Esophagus muscularis mucosa (tissue), 4 donors: ENCODE measurements at regions of chr7 and their contacts with region 1.

Region 1: DNA sequence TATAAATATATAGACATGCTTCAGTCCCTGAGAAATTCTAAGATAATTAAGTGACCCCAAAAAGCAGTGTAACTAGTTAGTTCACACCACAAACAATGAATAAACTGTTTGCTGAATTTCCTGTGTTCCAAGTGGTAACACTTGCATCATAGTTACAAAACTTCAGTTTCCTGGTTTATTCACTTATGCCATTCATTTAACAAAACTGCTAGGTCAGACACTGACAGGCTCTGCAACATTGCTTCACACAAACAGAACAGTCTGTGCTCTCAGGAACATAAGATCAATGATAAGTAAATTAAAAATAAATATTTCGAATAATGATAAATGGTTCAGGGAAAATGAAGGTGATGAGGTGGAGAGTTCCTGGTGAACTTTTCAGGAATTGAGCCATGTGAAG is 133.3 kb upstream of the NAMPT start:
- DNase-seq: no peak
- H3K4me3 ChIP-seq: no peak overlapping the region
- H3K27ac ChIP-seq: peak overlapping the region; percentile 39 to 63 (median 49)
- H3K4me1 ChIP-seq: peaks cover 22 to 57% (median 38%) of the 10 kb centered on the region in 4 donors
- H3K27me3 ChIP-seq: no peaks in the 10 kb centered on the region
- CTCF ChIP-seq: no peak
- EP300 ChIP-seq: peak; percentile 84
- POLR2A ChIP-seq: no peak

Region 2: GRCh38 chr7:106294337-106294736 is 123.8 kb before region 1 on chr7:
- intact Hi-C with region 1: loop called (anchors 5 kb)
- DNase-seq: no peak
- H3K4me3 ChIP-seq: no peak overlapping the region
- H3K27ac ChIP-seq: no peak overlapping the region
- H3K4me1 ChIP-seq: no peaks in the 10 kb centered on the region
- H3K27me3 ChIP-seq: no peaks in the 10 kb centered on the region
- CTCF ChIP-seq: no peak
- EP300 ChIP-seq: no peak
- POLR2A ChIP-seq: no peak

Region 3: GRCh38 chr7:106346678-106347217 is 71.3 kb before region 1 on chr7:
- intact Hi-C with region 1: loop called (anchors 2 kb)
- DNase-seq: peak; percentile 42
- H3K4me3 ChIP-seq: no peak overlapping the region
- H3K27ac ChIP-seq: no peak overlapping the region
- H3K4me1 ChIP-seq: no peaks in the 10 kb centered on the region
- H3K27me3 ChIP-seq: no peaks in the 10 kb centered on the region
- CTCF ChIP-seq: no peak
- EP300 ChIP-seq: no peak
- POLR2A ChIP-seq: no peak

Region 4: GRCh38 chr7:106448992-106449859 is 31.1 kb after region 1 on chr7:
- intact Hi-C with region 1: no loop called
- DNase-seq: no peak
- H3K4me3 ChIP-seq: no peak overlapping the region
- H3K27ac ChIP-seq: no peak overlapping the region
- H3K4me1 ChIP-seq: no peaks in the 10 kb centered on the region
- H3K27me3 ChIP-seq: no peaks in the 10 kb centered on the region
- CTCF ChIP-seq: no peak
- EP300 ChIP-seq: no peak
- POLR2A ChIP-seq: no peak

Region 5: GRCh38 chr7:106542550-106543220 is 124.6 kb after region 1 on chr7:
- intact Hi-C with region 1: no loop called
- DNase-seq: peak; percentile 89
- H3K4me3 ChIP-seq: no peak overlapping the region
- H3K27ac ChIP-seq: peak overlapping the region; percentile 68 to 80 (median 72)
- H3K4me1 ChIP-seq: peaks cover 6 to 24% (median 18%) of the 10 kb centered on the region in 4 donors
- H3K27me3 ChIP-seq: no peaks in the 10 kb centered on the region
- CTCF ChIP-seq: peak; percentile 58 to 63 (median 60)
- EP300 ChIP-seq: no peak
- POLR2A ChIP-seq: no peak